CD8-positive, alpha-beta memory T cell (primary cell): ENCODE measurements at regions of chr6 and their contacts with region 1.

Region 1: GRCh38 chr6:73329201-73329600 is 24.9 kb downstream of the DPPA5 start:
- DNase-seq: no peak
- H3K4me3 ChIP-seq: no peak overlapping the region
- H3K4me3 Mint-ChIP-seq: no peak overlapping the region
- H3K27ac ChIP-seq: no peak overlapping the region
- H3K27ac Mint-ChIP-seq: peak overlapping the region in 1 of 8 donors; percentile 3
- H3K4me1 ChIP-seq: no peaks in the 10 kb centered on the region
- H3K4me1 Mint-ChIP-seq: no peaks in the 10 kb centered on the region
- H3K27me3 ChIP-seq: no peaks in the 10 kb centered on the region
- H3K27me3 Mint-ChIP-seq: peaks cover 5 to 34% of the 10 kb centered on the region in 2 donors

Region 2: DNA sequence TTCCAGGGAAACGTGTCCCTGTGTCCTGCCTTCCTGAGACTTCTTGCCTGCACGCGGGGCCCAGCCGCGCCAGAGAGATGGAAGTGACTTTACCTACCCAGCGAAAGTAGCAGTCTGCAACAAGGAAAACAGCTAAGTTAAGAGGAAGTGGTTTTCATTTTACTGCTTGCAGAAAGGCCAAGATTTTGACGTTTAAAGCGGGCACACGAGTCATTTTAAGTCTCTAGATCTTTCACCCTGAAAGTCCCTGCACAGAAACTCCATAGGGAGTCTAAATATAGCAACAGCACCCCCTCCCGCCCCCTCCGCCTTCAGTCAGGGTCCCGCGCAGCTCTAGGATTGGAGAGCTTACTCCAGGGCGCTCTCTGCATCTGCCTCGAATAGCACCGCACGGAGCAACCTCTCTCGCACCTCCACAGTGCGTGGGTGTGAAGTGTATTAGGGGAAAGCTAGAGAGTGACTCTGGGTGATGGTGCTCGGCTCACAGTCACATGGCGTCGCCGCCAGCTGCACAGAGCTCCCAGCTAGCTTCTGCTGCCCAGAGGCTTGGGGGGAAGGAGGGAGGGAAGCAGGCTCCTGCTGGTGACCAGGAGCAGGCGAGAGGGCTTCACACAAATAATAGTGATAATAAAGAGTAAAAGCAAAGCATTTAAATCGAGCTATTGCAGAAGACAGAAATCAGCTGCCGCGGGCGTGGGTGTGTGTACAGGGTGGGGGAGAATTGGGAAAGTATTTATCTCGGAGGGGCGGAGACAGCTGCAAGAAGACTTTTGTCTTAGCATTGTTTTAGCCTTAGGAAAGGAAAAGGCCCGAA is 709.1 kb before region 1 on chr6:
- CTCF ChIA-PET with region 1: interaction called, 13 read pairs
- POLR2A ChIA-PET with region 1: no interaction called
- DNase-seq: peak; percentile 34 to 73 (median 58)
- H3K4me3 ChIP-seq: peak overlapping the region; percentile 74
- H3K4me3 Mint-ChIP-seq: peak overlapping the region; percentile 90 to 97 (median 93)
- H3K27ac ChIP-seq: peak overlapping the region; percentile 2
- H3K27ac Mint-ChIP-seq: peak overlapping the region; percentile 70 to 95 (median 92)
- H3K4me1 ChIP-seq: peaks cover 22% of the 10 kb centered on the region
- H3K4me1 Mint-ChIP-seq: peaks cover 35 to 64% (median 57%) of the 10 kb centered on the region in 3 donors
- H3K27me3 ChIP-seq: no peaks in the 10 kb centered on the region
- H3K27me3 Mint-ChIP-seq: no peaks in the 10 kb centered on the region

Region 3: DNA sequence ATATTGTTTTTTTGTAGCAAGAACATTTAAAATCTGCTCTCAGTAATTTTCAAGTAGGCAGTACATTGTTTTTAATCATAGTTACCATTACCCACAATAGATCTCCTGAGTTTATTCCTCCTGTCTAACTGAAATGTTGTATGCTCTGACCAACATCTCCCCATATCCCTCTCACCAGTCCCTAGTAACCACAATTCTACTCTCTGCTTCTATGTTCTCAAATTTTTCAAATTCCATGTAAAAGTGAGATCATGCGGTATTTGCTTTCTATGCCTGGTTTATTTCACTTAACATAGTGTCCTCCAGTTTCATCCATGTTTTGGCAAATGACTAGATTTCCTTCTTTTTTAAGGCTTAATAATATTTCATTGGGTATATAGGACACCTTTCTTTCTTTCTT is 406.8 kb before region 1 on chr6:
- CTCF ChIA-PET with region 1: no interaction called
- POLR2A ChIA-PET with region 1: no interaction called
- DNase-seq: no peak
- H3K4me3 ChIP-seq: no peak overlapping the region
- H3K4me3 Mint-ChIP-seq: no peak overlapping the region
- H3K27ac ChIP-seq: no peak overlapping the region
- H3K27ac Mint-ChIP-seq: no peak overlapping the region
- H3K4me1 ChIP-seq: no peaks in the 10 kb centered on the region
- H3K4me1 Mint-ChIP-seq: no peaks in the 10 kb centered on the region
- H3K27me3 ChIP-seq: no peaks in the 10 kb centered on the region
- H3K27me3 Mint-ChIP-seq: no peaks in the 10 kb centered on the region

Region 4: DNA sequence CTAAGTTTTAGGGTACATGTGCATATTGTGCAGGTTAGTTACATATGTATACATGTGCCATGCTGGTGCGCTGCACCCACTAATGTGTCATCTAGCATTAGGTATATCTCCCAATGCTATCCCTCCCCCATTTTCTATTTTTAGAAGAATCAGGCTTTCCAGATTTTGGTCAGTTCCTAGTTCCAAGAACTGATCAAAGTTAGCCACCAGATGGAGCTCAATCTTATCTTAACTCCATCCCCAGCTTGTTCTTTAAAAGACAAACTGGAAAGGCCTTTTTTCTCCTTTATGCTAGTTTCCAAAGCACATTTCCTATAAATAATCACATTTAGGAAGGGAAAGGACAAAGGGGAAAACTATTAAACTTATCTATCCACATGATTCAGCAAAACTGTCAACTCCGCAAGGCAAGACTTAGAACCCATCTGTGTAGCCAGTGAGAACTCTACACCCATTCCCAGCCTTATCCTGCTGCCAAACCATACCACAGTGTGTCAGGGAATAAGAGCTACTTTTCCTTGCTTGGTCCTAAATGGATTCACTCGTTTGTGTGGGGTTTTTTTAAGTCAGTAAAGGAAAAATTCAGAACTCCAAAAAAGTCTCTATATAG is 43.4 kb before region 1 on chr6:
- CTCF ChIA-PET with region 1: interaction called, 12 read pairs
- POLR2A ChIA-PET with region 1: interaction called, 3 read pairs
- DNase-seq: no peak
- H3K4me3 ChIP-seq: no peak overlapping the region
- H3K4me3 Mint-ChIP-seq: no peak overlapping the region
- H3K27ac ChIP-seq: no peak overlapping the region
- H3K27ac Mint-ChIP-seq: no peak overlapping the region
- H3K4me1 ChIP-seq: no peaks in the 10 kb centered on the region
- H3K4me1 Mint-ChIP-seq: no peaks in the 10 kb centered on the region
- H3K27me3 ChIP-seq: no peaks in the 10 kb centered on the region
- H3K27me3 Mint-ChIP-seq: no peaks in the 10 kb centered on the region

Region 5: GRCh38 chr6:73314577-73315492 is 14.4 kb before region 1 on chr6:
- CTCF ChIA-PET with region 1: interaction called, 12 read pairs
- POLR2A ChIA-PET with region 1: no interaction called
- DNase-seq: no peak
- H3K4me3 ChIP-seq: no peak overlapping the region
- H3K4me3 Mint-ChIP-seq: peak overlapping the region in 1 of 7 donors; percentile 6
- H3K27ac ChIP-seq: no peak overlapping the region
- H3K27ac Mint-ChIP-seq: no peak overlapping the region
- H3K4me1 ChIP-seq: no peaks in the 10 kb centered on the region
- H3K4me1 Mint-ChIP-seq: peaks cover 5 to 15% (median 7%) of the 10 kb centered on the region in 3 donors
- H3K27me3 ChIP-seq: peaks cover 20% of the 10 kb centered on the region
- H3K27me3 Mint-ChIP-seq: peaks cover 31 to 42% of the 10 kb centered on the region in 2 donors